ENCODE measurements at regions of chr17 and their contacts with region 1.

Region 1: DNA sequence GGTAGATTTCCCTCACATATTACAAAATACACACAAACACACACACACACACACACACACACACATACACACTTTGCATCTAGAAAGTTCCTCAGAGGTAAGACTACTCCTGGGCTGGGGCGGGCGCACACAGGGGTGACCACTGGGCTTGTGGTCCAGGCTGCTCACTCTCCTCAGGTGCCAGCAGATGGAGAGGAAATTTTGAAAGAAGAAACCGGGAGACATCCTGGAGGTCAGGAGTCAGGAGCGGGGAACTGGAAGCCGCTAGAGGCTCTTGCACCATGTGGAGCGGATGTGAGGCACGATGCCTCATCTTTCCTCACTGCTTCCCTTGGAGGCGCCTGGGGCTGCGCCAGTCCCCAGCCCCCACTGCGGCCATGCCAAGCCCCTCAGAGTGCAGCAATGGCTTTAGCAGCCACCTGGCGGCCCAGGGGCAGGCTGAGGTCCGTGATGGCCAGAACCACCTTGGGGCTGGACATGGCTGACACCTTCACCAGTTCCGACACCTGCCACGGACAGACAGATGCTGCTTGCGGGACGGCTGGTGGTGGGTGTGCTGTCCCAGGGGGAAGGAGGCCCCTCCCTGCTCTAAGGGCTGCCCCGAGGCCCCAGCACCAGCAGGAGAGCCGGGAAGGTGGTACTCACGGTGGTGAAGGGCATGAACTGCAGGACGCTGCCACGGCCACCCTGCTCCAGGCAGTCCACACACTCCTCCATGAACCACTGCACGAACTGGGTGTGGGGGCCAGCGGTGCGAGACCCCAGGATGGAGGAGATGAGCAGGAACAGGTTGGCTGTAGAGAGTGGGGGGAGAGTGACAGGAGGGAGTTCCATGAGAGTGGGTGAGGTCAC is 4.1 kb downstream of the CSF3 start:
- DNase-seq: no peak

Region 2: GRCh38 chr17:39996800-39997199 is 22.6 kb before region 1 on chr17:
- intact Hi-C with region 1: no loop called
- DNase-seq: no peak

Region 3: DNA sequence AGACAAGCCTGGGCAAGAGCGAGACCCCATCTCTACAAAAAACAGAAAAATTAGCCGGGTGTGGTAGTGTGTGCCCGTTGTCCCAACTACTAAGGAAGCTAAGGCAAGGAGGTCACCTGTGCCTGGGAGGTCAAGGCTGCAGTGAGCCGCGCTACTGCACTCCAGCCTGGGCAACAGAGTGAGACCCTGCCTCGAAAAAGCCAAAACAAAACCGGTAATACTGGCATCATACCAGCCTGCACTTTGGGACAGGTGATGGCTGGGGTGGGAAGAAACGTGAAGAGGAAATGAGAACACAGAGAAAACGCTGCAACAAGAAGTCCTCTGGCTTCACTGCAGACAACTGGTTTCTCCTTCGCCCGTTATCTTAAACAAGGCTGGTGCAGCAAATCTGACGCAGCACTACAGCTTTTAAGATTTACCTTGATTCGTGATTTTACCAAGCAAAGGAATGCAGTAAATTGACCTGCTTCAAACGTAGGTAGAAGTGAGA is 120.2 kb after region 1 on chr17:
- intact Hi-C with region 1: no loop called
- DNase-seq: no peak

Region 4: GRCh38 chr17:40168262-40168832 is 149.0 kb after region 1 on chr17:
- intact Hi-C with region 1: loop called (anchors 5 kb)
- DNase-seq: no peak

Region 5: DNA sequence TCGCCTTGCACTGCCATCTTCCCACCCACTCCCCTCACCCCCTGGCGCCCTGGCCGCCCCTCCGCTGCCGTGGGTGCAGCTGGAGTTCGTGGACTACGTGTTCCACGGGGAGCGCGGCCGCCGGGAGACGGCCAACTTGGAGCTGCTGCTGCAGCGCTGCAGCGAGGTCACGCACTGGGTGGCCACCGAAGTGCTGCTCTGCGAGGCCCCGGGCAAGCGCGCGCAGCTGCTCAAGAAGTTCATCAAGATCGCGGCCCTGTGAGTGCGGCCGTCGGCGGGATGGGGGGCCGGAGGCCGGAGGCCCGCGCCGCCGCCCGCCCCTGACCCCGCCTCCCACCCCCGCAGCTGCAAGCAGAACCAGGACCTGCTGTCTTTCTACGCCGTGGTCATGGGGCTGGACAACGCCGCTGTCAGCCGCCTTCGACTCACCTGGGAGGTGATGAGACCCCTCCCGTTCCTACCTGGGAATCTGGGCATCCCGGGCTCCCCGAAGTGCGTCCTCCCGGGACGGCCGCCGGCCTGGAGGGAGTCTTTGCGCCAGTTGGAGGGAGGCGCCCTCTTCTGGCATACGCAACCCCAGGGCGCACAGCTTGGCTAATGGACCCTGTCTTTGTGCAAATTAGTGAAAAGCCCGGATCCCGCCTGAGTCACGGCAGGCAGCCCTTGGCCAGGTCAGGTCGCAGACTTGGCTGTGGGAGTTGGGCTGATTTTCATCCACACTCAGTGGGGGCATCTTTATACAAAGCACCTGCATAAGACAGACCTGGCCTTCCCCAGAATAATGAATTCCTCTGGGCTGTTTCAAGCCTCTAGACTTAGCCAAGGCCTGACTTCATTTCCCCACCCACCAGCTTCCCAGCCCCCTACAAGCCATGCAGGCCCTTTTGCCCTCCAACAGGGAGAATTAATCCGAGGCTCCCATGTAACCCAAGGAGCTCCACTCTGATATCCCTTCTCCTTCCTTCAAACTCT is 172.2 kb after region 1 on chr17:
- intact Hi-C with region 1: loop called (anchors 10 kb)
- DNase-seq: peak; percentile 84

Measured in cardiac septum (tissue), 1 donor.